ENCODE measurements at regions of chr1 and their contacts with region 1.

Region 1: DNA sequence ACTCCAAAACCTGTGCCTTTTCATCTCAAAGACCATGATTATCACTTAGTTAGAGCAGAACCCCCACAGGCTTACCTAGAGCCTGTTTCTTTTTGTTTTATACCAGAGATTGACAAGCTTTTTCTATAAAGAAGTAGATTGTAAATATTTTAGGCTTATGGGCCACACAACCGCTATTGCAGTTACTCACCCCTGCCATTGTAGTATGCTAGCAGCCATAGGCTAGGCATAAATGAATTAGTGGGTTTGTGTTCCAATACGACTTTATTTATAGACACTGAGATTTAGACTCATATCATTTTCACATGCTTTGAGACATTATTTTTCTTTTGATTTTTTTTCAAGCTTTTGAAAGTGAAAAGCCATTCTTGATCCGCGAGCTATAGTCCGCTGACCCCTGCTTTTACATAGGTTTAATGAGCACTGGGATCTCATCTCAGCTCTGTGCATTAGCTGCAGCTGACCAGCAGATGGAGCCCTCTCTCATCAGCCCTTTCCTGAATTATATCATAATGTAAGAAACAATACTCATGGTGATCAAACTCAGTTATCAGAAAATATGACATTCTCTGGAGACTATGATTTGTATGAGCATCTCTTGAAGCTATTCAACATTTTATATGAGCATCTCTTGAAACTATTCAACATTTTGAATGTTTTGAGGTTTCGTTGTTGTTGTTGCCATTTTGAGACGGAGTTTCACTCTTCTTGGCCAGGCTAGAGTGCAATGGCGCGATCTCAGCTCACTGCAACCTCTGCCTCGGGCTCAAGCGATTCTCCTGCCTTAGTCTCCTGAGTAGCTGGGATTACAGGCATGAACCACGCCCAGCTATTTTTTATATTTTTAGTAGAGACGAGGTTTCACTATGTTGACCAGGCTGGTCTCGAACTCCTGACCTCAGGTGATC is 111.9 kb upstream of the L1TD1 start:
- DNase-seq: no peak
- H3K4me3 Mint-ChIP-seq: no peak overlapping the region
- H3K27ac Mint-ChIP-seq: no peak overlapping the region
- H3K4me1 Mint-ChIP-seq: no peaks in the 10 kb centered on the region
- H3K27me3 Mint-ChIP-seq: no peaks in the 10 kb centered on the region

Region 2: DNA sequence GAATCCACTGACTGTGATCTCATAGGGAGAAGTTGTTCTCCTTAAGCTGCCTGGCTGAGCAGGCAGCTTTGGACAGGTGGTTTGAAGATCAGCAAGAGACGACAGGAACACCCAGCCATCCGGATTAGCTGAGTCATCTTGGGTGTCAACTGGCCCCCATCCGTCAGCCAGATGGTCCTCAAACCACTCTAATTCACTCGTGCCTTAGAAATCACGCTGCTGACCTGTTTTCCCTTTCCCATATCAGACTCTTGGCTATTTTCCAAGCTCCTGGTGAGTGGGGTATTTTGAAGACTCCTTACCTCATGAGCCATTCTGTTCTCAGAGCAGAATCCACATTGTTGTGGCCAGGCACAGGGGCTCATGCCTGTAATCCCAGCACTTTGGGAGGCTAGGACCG is 37.1 kb before region 1 on chr1:
- intact Hi-C with region 1: no loop called
- DNase-seq: no peak
- H3K4me3 Mint-ChIP-seq: no peak overlapping the region
- H3K27ac Mint-ChIP-seq: no peak overlapping the region
- H3K4me1 Mint-ChIP-seq: no peaks in the 10 kb centered on the region
- H3K27me3 Mint-ChIP-seq: no peaks in the 10 kb centered on the region

Region 3: DNA sequence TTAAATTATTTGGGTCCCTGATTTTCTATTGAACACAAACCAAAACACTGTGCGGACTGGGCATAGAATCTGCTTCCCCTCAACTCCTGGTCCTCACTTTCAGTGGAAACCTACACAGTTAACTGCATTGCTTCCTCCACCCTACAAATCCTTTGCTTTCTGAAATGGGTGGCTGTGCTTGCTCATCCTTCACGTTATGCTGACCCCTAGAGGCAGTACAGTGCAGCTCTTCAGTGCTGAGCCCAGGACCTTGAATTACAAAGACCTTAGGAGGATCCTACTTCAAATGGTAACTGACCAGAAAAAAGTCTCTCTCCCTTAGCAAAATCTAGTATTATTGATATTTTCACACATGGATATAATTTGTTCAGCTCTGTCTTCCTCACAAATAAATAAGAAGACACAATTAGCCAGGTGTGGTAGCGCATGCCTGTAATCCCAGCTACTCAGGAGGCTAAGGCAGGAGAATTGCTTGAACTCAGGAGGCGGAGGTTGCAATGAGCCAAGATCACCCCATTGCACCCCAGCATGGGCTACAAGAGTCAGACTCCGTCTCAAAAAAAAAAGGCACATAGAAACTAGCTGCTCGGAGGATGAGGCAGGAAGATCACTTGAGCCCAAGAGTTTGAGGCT is 48.5 kb after region 1 on chr1:
- intact Hi-C with region 1: loop called (anchors 1 kb)
- DNase-seq: no peak
- H3K4me3 Mint-ChIP-seq: no peak overlapping the region
- H3K27ac Mint-ChIP-seq: no peak overlapping the region
- H3K4me1 Mint-ChIP-seq: no peaks in the 10 kb centered on the region
- H3K27me3 Mint-ChIP-seq: no peaks in the 10 kb centered on the region

Region 4: GRCh38 chr1:62294261-62294660 is 211.6 kb after region 1 on chr1:
- intact Hi-C with region 1: no loop called
- DNase-seq: no peak
- H3K4me3 Mint-ChIP-seq: no peak overlapping the region
- H3K27ac Mint-ChIP-seq: no peak overlapping the region
- H3K4me1 Mint-ChIP-seq: peaks cover 8% of the 10 kb centered on the region
- H3K27me3 Mint-ChIP-seq: no peaks in the 10 kb centered on the region

Region 5: GRCh38 chr1:62407405-62408009 is 324.8 kb after region 1 on chr1:
- intact Hi-C with region 1: loop called (anchors 2 kb)
- DNase-seq: no peak
- H3K4me3 Mint-ChIP-seq: no peak overlapping the region
- H3K27ac Mint-ChIP-seq: no peak overlapping the region
- H3K4me1 Mint-ChIP-seq: no peaks in the 10 kb centered on the region
- H3K27me3 Mint-ChIP-seq: peaks cover 6% of the 10 kb centered on the region

Measured in activated T-helper 2 cell treated with anti-CD3 and anti-CD28 coated beads, Interferon-gamma antibody, Interleukin-2, Interleukin-4, amounts not matched to agents 10 μg/mL and 5 μg/mL and 100 μg/mL, durations not matched to agents 14 hours and 24 hours and 36 hours (primary cell).